ENCODE measurements at regions of chr1 and their contacts with region 1.

Region 1: GRCh38 chr1:22131875-22132486 is 10.9 kb downstream of the WNT4 start:
- DNase-seq: peak; percentile 66
- H3K4me3 ChIP-seq: no peak overlapping the region
- H3K27ac ChIP-seq: no peak overlapping the region
- H3K4me1 ChIP-seq: peaks cover 1% of the 10 kb centered on the region
- CTCF ChIP-seq: peak; percentile 85

Region 2: DNA sequence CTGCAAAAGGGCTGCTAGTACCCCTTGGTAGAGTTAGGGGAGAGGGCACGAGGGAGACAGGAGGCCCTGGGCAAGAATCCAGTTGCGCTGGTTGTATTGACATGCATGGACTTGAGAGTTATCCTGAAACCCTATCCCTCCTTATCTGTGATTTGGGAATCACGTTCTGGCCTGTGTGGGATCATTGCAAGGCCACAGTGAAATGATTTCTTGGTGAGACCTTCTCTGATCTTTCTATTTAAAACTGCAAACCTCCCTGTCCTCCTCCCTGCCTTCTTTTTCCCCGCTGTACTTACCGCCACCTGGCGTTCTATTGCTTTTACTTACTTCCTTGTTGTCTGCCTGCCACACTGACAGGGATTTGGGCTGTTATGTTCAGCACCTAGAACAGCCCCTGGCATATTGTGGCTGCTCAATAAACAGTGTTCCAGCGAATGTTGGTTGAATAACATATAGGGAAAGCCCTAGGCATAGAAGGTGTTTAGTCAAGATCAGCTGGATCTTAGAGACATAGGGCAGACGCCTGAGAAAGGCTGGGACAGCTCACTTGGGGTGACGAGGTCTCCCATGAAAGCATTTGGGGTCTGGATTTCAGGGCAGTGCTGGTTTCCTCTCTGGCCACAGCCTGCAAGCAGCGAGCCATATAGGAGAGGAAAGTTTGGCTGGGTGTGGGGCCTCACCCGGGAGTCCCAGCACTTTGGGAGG is 597.2 kb before region 1 on chr1:
- CTCF ChIA-PET with region 1: no interaction called
- POLR2A ChIA-PET with region 1: no interaction called
- intact Hi-C with region 1: no loop called
- DNase-seq: peak; percentile 68
- H3K4me3 ChIP-seq: no peak overlapping the region
- H3K27ac ChIP-seq: no peak overlapping the region
- H3K4me1 ChIP-seq: no peaks in the 10 kb centered on the region
- CTCF ChIP-seq: peak; percentile 85

Region 3: DNA sequence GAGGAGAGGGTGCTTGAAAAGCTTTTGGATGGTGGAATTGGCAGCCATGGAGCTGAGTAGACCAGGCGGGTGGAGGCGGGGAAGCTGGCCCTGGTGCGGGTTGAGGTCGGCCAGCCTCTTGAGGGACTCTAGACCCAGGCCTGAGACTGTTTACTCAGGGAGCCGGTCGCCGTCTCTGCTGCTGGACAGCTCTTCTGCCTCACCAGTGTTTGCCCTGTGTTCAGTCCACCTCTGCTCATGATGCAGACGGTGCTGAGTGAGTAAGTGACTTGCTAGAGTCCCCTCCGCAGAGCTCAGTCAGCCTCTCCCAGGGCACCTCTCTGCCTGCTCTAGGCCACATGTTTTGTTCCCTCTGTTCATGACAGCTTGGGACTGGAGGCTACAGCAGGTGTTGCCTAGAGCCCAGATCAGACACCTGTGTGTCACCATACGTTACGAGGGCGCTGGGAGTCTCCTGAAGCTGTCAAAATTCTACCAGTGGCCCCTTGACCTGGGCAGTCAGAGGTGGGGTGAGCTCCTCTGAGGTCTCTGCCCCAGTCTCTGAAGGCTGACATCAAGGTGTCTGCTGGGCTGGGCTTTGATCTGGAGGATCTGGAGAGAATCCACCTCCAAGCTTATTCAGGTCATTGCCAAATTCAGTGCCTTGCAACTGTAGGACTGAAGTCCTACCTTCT is 84.4 kb after region 1 on chr1:
- CTCF ChIA-PET with region 1: no interaction called
- POLR2A ChIA-PET with region 1: no interaction called
- intact Hi-C with region 1: loop called (anchors 10 kb)
- DNase-seq: no peak
- H3K4me3 ChIP-seq: no peak overlapping the region
- H3K27ac ChIP-seq: no peak overlapping the region
- H3K4me1 ChIP-seq: no peaks in the 10 kb centered on the region
- CTCF ChIP-seq: no peak

Region 4: GRCh38 chr1:22275721-22276395 is 143.9 kb after region 1 on chr1:
- CTCF ChIA-PET with region 1: no interaction called
- POLR2A ChIA-PET with region 1: no interaction called
- intact Hi-C with region 1: loop called (anchors 1 kb)
- DNase-seq: peak; percentile 29
- H3K4me3 ChIP-seq: no peak overlapping the region
- H3K27ac ChIP-seq: no peak overlapping the region
- H3K4me1 ChIP-seq: no peaks in the 10 kb centered on the region
- CTCF ChIP-seq: peak; percentile 78

Region 5: DNA sequence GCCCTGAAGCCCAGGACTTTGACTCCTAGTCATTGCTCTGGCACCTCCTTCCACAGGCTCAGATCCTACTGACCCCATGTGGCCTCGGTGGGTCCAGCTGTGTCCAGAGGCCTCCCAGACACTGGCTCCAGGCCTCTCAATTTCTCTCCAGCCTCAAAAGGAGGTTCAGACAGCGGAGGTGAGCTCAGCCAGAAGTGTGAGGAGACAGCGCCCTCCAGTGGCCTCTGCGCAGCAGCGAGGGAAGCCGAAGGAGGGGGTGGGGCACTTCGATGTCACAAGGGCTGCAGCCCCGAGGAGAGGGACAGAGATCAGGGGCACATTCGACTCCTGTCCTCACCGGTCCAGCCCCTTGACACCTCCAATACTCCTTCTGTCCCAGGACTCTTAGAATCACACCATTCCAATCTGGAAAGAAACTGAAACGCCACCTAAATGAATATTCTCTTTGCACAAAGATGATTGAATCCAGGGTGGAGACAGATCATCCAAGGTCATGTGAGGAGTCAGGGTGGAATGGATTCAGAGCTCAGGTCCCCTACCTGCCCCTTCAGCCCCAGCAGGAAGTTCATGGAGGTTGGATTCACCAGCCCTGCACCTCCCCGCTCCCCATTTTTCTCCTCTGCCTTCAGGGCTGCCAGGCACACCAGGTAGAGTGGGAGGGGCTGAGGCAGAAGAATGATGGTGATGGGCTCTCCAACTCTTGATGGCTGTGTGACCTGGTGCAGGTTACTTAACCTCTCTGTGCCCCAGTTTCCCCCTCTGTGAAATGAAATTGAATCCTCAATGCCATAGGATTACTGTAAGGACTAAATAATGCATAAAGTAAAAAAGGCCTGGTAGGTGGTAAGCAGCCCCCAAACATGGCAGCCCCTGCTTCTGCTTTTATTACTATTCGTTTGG is 284.8 kb after region 1 on chr1:
- CTCF ChIA-PET with region 1: no interaction called
- POLR2A ChIA-PET with region 1: no interaction called
- intact Hi-C with region 1: loop called (anchors 1 kb)
- DNase-seq: peak; percentile 72
- H3K4me3 ChIP-seq: no peak overlapping the region
- H3K27ac ChIP-seq: no peak overlapping the region
- H3K4me1 ChIP-seq: peaks cover 17% of the 10 kb centered on the region
- CTCF ChIP-seq: peak; percentile 95

Region 6: DNA sequence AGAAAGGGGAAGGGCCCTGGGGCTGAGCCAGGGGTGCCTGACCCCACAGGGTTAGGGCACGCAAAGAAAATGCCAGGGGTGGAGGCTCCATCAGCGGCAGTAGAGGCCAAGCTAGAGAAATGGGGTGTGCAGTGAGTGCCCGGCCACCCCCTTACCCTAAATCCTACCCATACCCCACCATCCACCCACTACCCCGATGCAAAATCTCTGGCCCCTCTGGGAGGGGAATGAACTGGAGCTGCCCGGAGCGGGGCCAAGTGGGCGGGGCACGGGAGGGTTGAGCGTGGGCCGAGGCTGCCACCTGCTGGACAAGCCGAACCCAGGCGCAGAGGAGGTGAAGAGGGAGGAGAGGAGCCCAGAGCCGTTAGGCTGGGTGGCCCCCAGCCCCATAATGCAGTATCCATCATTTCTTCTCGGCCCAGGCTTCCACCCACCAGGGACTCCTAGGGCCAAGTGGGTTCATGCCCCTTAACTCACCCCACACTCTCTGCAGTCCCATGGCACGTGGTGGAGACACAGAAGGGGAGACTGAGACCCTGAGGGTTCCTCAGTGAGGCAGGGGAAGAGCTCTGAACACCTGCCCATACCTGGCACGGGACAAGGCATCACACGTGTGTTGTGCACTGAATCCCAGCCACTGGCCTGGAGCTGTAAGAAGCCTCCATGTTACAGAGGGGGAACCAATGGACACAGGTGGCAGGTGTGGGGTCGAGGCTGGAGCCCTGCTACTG is 510.1 kb after region 1 on chr1:
- CTCF ChIA-PET with region 1: no interaction called
- POLR2A ChIA-PET with region 1: no interaction called
- intact Hi-C with region 1: loop called (anchors 5 kb)
- DNase-seq: peak; percentile 64
- H3K4me3 ChIP-seq: no peak overlapping the region
- H3K27ac ChIP-seq: no peak overlapping the region
- H3K4me1 ChIP-seq: no peaks in the 10 kb centered on the region
- CTCF ChIP-seq: peak; percentile 88

Measured in OCI-LY7 (cell line).